ENCODE measurements at regions of chr11 and their contacts with region 1.

Region 1: DNA sequence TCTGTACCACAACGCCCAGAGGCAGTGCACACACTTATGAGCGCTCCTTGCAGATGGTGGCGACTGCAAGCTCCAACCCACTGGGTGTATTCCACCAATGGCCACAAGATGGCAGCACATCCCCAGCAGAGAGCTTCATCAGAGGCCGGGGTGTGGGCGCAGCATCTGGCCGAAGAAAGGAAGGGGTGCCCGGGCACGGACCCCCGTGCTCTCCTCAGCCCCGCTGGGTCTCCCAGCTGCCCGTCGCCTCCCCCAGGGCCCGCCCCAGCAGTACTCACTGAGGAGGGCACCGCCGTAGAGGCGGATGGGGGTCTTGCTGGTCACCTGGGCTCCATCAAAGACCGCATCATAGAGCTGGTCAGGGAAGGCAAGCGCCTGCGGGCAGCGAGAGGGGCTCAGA is 14.2 kb downstream of the TP53I11 start:
- DNase-seq: peak; percentile 81
- ATAC-seq: peak; percentile 84 to 85
- H3K4me3 ChIP-seq: no peak overlapping the region
- H3K27ac ChIP-seq: no peak overlapping the region
- H3K4me1 ChIP-seq: peaks cover 15% of the 10 kb centered on the region
- H3K27me3 ChIP-seq: no peaks in the 10 kb centered on the region
- CTCF ChIP-seq: peak; percentile 97

Region 2: GRCh38 chr11:44865866-44866272 is 70.7 kb before region 1 on chr11:
- intact Hi-C with region 1: no loop called
- DNase-seq: no peak
- ATAC-seq: no peak
- H3K4me3 ChIP-seq: no peak overlapping the region
- H3K27ac ChIP-seq: no peak overlapping the region
- H3K4me1 ChIP-seq: peaks cover 10% of the 10 kb centered on the region
- H3K27me3 ChIP-seq: no peaks in the 10 kb centered on the region
- CTCF ChIP-seq: no peak

Region 3: DNA sequence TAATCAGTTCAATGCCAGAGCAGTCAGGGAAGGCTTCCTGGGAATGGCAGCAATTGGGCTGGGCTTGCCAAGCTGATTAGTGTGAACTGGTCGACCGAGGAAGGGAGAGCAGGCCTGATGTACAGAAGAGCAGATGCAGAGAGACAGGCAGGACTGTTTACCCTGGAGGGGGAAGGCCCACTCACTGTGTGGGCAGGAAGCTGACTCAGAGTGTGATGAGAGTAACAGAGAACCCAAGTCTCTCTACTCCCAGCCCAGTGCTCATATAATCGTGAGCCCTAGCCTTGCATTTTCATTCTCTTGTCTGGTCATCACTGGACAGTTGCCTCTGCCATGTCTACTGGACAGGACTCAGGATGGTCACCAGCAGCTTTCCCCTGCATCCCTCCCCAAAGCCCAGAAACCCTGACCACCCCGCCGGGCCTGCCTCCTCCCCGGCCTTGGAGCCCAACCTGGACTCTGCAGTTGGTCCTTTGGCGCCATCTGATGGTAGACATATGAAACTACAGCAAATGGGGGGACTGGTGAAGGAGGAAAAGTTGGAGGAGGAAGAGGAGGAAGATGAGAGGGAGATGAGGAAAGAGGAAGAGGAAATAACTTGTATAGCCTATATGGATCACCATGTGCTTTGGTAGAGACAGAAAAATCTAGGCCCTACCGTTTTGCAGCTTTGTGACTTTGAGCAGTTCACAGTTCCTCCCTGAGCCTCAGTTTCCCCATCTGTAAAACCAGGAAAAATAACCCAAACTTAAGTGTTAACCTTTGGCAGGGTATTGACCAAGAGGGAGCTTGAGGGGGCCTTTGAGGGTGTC is 166.5 kb after region 1 on chr11:
- intact Hi-C with region 1: loop called (anchors 5 kb)
- DNase-seq: no peak
- ATAC-seq: peak; percentile 73 to 75
- H3K4me3 ChIP-seq: no peak overlapping the region
- H3K27ac ChIP-seq: no peak overlapping the region
- H3K4me1 ChIP-seq: peaks cover 10% of the 10 kb centered on the region
- H3K27me3 ChIP-seq: no peaks in the 10 kb centered on the region
- CTCF ChIP-seq: peak; percentile 96